ENCODE measurements at regions of chr12 and their contacts with region 1.

Region 1: GRCh38 chr12:49967042-49967776 is 5.5 kb downstream of the AQP5 start:
- DNase-seq: peak; percentile 72 to 96 (median 89)
- ATAC-seq: peak; percentile 84 to 88 (median 84)
- H3K4me3 ChIP-seq: peak overlapping the region; percentile 48 to 60
- H3K4me3 Mint-ChIP-seq: peak overlapping the region; percentile 55 to 79 (median 64)
- H3K27ac ChIP-seq: no peak overlapping the region
- H3K27ac Mint-ChIP-seq: no peak overlapping the region
- H3K4me1 ChIP-seq: peaks cover 0 to 16% of the 10 kb centered on the region in 2 experiments
- H3K4me1 Mint-ChIP-seq: peaks cover 4 to 6% (median 6%) of the 10 kb centered on the region in 3 donors
- H3K27me3 ChIP-seq: peaks cover 0 to 89% of the 10 kb centered on the region in 2 experiments
- H3K27me3 Mint-ChIP-seq: peaks cover 24 to 44% of the 10 kb centered on the region in 2 donors

Region 2: DNA sequence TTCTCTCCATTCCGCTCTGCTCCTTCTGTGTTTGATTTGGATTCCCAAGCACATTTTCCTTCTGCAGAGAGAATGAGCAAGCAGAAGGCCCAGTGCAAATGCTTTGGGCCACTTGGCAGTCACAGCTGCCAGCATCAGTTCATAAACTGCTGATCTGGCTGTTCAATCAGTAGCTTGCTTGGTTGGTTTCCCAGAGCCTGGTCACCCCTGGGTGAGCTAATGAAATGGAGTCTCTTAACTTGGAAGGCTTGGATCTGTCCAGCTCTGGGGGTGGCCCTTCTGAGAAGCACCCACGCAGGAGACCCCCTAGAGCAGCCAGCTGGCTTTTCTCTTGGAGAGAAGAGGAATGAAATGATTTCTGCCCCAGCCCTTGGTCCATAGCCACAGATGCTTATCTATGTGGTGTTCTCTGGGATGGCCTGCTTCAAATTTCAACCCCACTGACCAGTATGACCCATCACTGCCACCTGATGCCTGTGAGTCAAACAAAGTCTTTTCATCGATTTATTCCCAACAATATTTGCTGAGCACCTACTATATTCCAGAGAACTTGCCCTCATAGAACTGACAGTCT is 93.8 kb before region 1 on chr12:
- CTCF ChIA-PET with region 1: no interaction called
- POLR2A ChIA-PET with region 1: no interaction called
- DNase-seq: no peak
- ATAC-seq: no peak
- H3K4me3 ChIP-seq: no peak overlapping the region
- H3K4me3 Mint-ChIP-seq: no peak overlapping the region
- H3K27ac ChIP-seq: no peak overlapping the region
- H3K27ac Mint-ChIP-seq: no peak overlapping the region
- H3K4me1 ChIP-seq: no peaks in the 10 kb centered on the region
- H3K4me1 Mint-ChIP-seq: no peaks in the 10 kb centered on the region
- H3K27me3 ChIP-seq: no peaks in the 10 kb centered on the region
- H3K27me3 Mint-ChIP-seq: peaks cover 0 to 2% of the 10 kb centered on the region in 2 donors

Region 3: GRCh38 chr12:49945394-49946080 is 21.7 kb before region 1 on chr12:
- CTCF ChIA-PET with region 1: interaction called in 1 of 2 experiments, 16 read pairs
- POLR2A ChIA-PET with region 1: no interaction called
- DNase-seq: peak; percentile 33 to 89 (median 69)
- ATAC-seq: peak; percentile 90 to 98 (median 94)
- H3K4me3 ChIP-seq: peak overlapping the region; percentile 29 to 65
- H3K4me3 Mint-ChIP-seq: peak overlapping the region; percentile 70 to 83 (median 81)
- H3K27ac ChIP-seq: peak overlapping the region; percentile 30
- H3K27ac Mint-ChIP-seq: peak overlapping the region; percentile 84 to 97
- H3K4me1 ChIP-seq: peaks cover 0 to 21% of the 10 kb centered on the region in 2 experiments
- H3K4me1 Mint-ChIP-seq: peaks cover 17 to 47% (median 29%) of the 10 kb centered on the region in 3 donors
- H3K27me3 ChIP-seq: peaks cover 0 to 25% of the 10 kb centered on the region in 2 experiments
- H3K27me3 Mint-ChIP-seq: peaks cover 0 to 11% of the 10 kb centered on the region in 2 donors

Region 4: GRCh38 chr12:49955899-49956662 is 11.1 kb before region 1 on chr12:
- CTCF ChIA-PET with region 1: no interaction called
- POLR2A ChIA-PET with region 1: no interaction called
- DNase-seq: no peak
- ATAC-seq: no peak
- H3K4me3 ChIP-seq: no peak overlapping the region
- H3K4me3 Mint-ChIP-seq: no peak overlapping the region
- H3K27ac ChIP-seq: no peak overlapping the region
- H3K27ac Mint-ChIP-seq: no peak overlapping the region
- H3K4me1 ChIP-seq: peaks cover 0 to 4% of the 10 kb centered on the region in 2 experiments
- H3K4me1 Mint-ChIP-seq: peaks cover 5 to 11% (median 9%) of the 10 kb centered on the region in 3 donors
- H3K27me3 ChIP-seq: peaks cover 18 to 88% of the 10 kb centered on the region in 2 experiments
- H3K27me3 Mint-ChIP-seq: peaks cover 59 to 78% of the 10 kb centered on the region in 2 donors

Region 5: GRCh38 chr12:50055831-50056638 is 88.8 kb after region 1 on chr12:
- CTCF ChIA-PET with region 1: interaction called, 3 to 24 read pairs
- POLR2A ChIA-PET with region 1: no interaction called
- DNase-seq: peak in 32 of 35 experiments; percentile 12 to 73 (median 45)
- ATAC-seq: peak; percentile 39 to 63 (median 49)
- H3K4me3 ChIP-seq: peak overlapping the region in 1 of 2 donors; percentile 46
- H3K4me3 Mint-ChIP-seq: peak overlapping the region; percentile 86 to 94 (median 87)
- H3K27ac ChIP-seq: no peak overlapping the region
- H3K27ac Mint-ChIP-seq: peak overlapping the region in 1 of 2 donors; percentile 63
- H3K4me1 ChIP-seq: peaks cover 27 to 48% of the 10 kb centered on the region in 2 experiments
- H3K4me1 Mint-ChIP-seq: peaks cover 35 to 48% (median 42%) of the 10 kb centered on the region in 3 donors
- H3K27me3 ChIP-seq: peaks cover 3 to 78% of the 10 kb centered on the region in 2 experiments
- H3K27me3 Mint-ChIP-seq: peaks cover 30 to 65% of the 10 kb centered on the region in 2 donors

Region 6: GRCh38 chr12:50074936-50075807 is 108.0 kb after region 1 on chr12:
- CTCF ChIA-PET with region 1: interaction called in 1 of 2 experiments, 14 read pairs
- POLR2A ChIA-PET with region 1: no interaction called
- DNase-seq: peak; percentile 38 to 88 (median 71)
- ATAC-seq: peak; percentile 89 to 94 (median 92)
- H3K4me3 ChIP-seq: no peak overlapping the region
- H3K4me3 Mint-ChIP-seq: no peak overlapping the region
- H3K27ac ChIP-seq: no peak overlapping the region
- H3K27ac Mint-ChIP-seq: no peak overlapping the region
- H3K4me1 ChIP-seq: peaks cover 0 to 14% of the 10 kb centered on the region in 2 experiments
- H3K4me1 Mint-ChIP-seq: peaks cover 8 to 13% (median 9%) of the 10 kb centered on the region in 3 donors
- H3K27me3 ChIP-seq: peaks cover 0 to 8% of the 10 kb centered on the region in 2 experiments
- H3K27me3 Mint-ChIP-seq: peaks cover 0 to 5% of the 10 kb centered on the region in 2 donors

Measured in T-cell (primary cell).